Naive thymus-derived CD4-positive, alpha-beta T cell (primary cell): ENCODE measurements at regions of chr2 and their contacts with region 1.

Region 1: DNA sequence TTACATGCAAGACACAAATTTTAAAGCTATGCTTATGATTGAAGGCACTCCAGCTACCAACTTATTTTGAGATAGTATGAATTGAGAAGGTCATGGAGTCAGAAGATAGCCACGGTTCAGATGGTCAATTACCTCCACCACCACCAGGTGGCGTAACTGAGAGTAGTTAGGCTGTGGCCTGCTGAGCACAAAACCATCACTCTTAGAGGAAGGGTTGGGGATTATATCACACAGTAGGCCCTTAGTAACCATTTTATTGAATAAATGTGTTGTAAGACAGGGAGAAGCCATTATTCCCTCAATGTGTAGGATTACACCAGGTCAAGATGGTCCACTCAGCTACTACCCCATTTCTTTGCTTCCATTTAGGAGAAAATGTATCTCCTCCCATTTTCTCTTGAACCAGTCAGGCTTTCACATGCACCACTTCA is 18.8 kb downstream of the KLHL41 start:
- DNase-seq: peak; percentile 31 to 71 (median 54)
- ATAC-seq: peak; percentile 92
- H3K4me3 ChIP-seq: no peak overlapping the region
- H3K4me3 Mint-ChIP-seq: no peak overlapping the region
- H3K27ac ChIP-seq: no peak overlapping the region
- H3K27ac Mint-ChIP-seq: peak overlapping the region in 4 of 9 donors; percentile 0 to 68 (median 20)
- H3K4me1 ChIP-seq: no peaks in the 10 kb centered on the region
- H3K4me1 Mint-ChIP-seq: peaks cover 0 to 8% (median 0%) of the 10 kb centered on the region in 7 donors
- H3K27me3 ChIP-seq: no peaks in the 10 kb centered on the region
- H3K27me3 Mint-ChIP-seq: no peaks in the 10 kb centered on the region

Region 2: DNA sequence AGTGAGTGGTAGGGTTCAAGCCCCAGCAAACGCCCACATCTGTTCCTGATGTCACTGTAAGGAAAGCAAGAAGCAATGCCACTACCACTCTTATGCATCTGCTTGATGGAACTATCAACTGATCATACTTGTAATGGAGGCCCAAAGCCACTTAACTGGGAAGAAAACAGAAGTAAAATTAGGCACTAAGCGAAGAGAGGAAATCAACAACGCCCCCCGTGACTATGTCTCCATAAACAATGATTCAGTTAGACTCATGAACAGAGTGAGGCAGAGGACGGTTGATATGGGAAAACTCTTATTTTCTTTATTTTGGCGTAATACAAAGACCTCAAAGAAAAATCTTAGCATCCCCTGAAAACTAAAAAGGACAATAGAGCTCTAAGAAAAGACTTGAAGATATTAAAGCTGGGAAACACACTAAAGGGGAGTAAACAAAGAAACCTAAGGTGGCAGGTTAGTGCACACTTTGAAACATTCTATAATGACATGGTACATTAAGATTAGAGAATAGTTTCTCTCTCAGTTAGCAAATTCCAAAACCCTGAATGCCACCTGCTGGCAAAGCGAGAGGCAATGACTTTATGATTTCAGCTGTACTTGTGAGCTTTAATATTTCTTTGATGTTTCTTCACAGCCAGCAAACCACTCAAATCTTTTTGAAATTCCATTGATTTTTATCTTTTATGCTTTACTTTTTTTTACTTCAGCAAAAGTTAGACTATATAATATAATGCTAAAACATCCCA is 252.4 kb before region 1 on chr2:
- CTCF ChIA-PET with region 1: no interaction called
- POLR2A ChIA-PET with region 1: no interaction called
- intact Hi-C with region 1: no loop called
- DNase-seq: no peak
- ATAC-seq: no peak
- H3K4me3 ChIP-seq: no peak overlapping the region
- H3K4me3 Mint-ChIP-seq: no peak overlapping the region
- H3K27ac ChIP-seq: no peak overlapping the region
- H3K27ac Mint-ChIP-seq: no peak overlapping the region
- H3K4me1 ChIP-seq: no peaks in the 10 kb centered on the region
- H3K4me1 Mint-ChIP-seq: no peaks in the 10 kb centered on the region
- H3K27me3 ChIP-seq: no peaks in the 10 kb centered on the region
- H3K27me3 Mint-ChIP-seq: peaks cover 0 to 21% (median 17%) of the 10 kb centered on the region in 5 donors

Region 3: GRCh38 chr2:169734169-169734847 is 206.0 kb after region 1 on chr2:
- CTCF ChIA-PET with region 1: no interaction called
- POLR2A ChIA-PET with region 1: no interaction called
- intact Hi-C with region 1: no loop called
- DNase-seq: peak in 5 of 9 donors; percentile 0 to 57 (median 8)
- ATAC-seq: peak; percentile 45
- H3K4me3 ChIP-seq: peak overlapping the region; percentile 43
- H3K4me3 Mint-ChIP-seq: peak overlapping the region; percentile 65 to 96 (median 73)
- H3K27ac ChIP-seq: no peak overlapping the region
- H3K27ac Mint-ChIP-seq: no peak overlapping the region
- H3K4me1 ChIP-seq: peaks cover 7 to 8% of the 10 kb centered on the region in 2 donors
- H3K4me1 Mint-ChIP-seq: peaks cover 12 to 27% (median 18%) of the 10 kb centered on the region in 7 donors
- H3K27me3 ChIP-seq: peaks cover 0 to 22% of the 10 kb centered on the region in 2 donors
- H3K27me3 Mint-ChIP-seq: peaks cover 30 to 49% (median 45%) of the 10 kb centered on the region in 5 donors

Region 4: DNA sequence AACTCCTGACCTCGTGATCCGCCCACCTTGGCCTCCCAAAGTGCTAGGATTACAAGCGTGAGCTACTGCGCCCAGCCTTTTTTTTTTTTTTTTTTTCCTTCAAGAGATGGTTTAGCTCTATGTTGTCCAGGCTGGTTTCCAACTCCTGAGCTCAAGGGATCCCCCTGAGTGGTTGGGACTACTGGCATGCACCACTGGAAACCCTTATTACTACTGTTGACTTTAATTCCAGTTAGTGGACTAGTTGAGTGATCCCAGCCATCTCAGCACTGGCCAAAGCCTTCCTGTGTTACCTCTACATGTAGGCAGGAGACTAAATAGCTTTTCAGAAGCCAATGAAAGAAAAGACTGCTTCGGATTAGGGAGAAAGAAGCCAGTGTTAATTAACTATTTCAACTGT is 262.3 kb after region 1 on chr2:
- CTCF ChIA-PET with region 1: no interaction called
- POLR2A ChIA-PET with region 1: no interaction called
- intact Hi-C with region 1: loop called (anchors 2 to 10 kb)
- DNase-seq: no peak
- ATAC-seq: no peak
- H3K4me3 ChIP-seq: no peak overlapping the region
- H3K4me3 Mint-ChIP-seq: no peak overlapping the region
- H3K27ac ChIP-seq: no peak overlapping the region
- H3K27ac Mint-ChIP-seq: no peak overlapping the region
- H3K4me1 ChIP-seq: no peaks in the 10 kb centered on the region
- H3K4me1 Mint-ChIP-seq: peaks cover 4 to 6% (median 6%) of the 10 kb centered on the region in 7 donors
- H3K27me3 ChIP-seq: no peaks in the 10 kb centered on the region
- H3K27me3 Mint-ChIP-seq: peaks cover 25 to 40% (median 27%) of the 10 kb centered on the region in 5 donors

Region 5: DNA sequence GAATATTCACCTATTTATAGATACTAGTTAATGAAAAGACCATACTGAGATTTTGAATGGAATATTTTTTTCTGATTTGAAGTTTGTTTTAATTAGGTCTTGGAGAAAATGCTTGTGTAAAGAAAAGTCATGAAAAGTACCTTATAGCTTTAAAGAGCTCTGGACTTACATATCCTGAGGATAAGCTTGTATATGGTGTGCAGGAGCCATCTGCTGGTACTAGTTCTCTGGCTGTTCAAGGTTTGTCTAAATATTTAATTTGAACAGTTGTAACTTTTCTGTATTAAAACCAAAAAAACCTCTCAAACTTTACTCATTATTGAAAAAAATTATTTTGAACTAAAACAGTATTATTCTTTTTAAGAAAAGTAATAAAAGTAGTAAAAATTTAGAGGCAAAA is 349.1 kb after region 1 on chr2:
- CTCF ChIA-PET with region 1: no interaction called
- POLR2A ChIA-PET with region 1: no interaction called
- intact Hi-C with region 1: loop called (anchors 1 kb)
- DNase-seq: peak in 1 of 9 donors; percentile 11
- ATAC-seq: no peak
- H3K4me3 ChIP-seq: no peak overlapping the region
- H3K4me3 Mint-ChIP-seq: no peak overlapping the region
- H3K27ac ChIP-seq: no peak overlapping the region
- H3K27ac Mint-ChIP-seq: no peak overlapping the region
- H3K4me1 ChIP-seq: no peaks in the 10 kb centered on the region
- H3K4me1 Mint-ChIP-seq: peaks cover 0 to 10% (median 5%) of the 10 kb centered on the region in 7 donors
- H3K27me3 ChIP-seq: no peaks in the 10 kb centered on the region
- H3K27me3 Mint-ChIP-seq: no peaks in the 10 kb centered on the region

Region 6: DNA sequence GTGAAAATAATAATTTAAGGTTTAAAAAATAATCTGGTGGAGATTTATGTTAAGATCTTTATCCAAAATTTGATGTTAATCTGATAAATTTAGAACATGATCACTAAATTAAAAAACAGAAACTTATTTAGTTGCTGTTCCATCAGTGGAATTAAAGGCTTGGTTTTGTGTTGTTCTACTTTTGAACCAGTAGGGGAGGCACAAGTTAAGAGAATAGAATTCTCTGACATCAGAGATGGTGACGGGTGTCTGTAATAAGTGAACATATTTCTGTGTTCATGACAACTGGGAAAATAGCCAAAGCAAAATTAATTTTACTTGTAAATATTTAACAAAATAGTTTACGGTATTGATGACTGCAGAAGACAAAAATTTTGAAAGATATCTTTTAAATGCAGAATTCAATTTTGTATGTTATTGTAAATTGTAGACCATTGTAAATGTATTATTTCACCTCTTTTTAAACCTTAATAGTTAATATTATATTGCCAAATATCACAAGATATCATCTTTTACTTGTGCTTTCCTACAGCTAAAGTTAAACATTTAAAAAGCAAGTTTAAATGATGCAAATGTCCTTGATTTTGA is 404.9 kb after region 1 on chr2:
- CTCF ChIA-PET with region 1: interaction called, 10 read pairs
- POLR2A ChIA-PET with region 1: no interaction called
- intact Hi-C with region 1: loop called (anchors 1 kb)
- DNase-seq: peak in 2 of 9 donors; percentile 6 to 9
- ATAC-seq: no peak
- H3K4me3 ChIP-seq: no peak overlapping the region
- H3K4me3 Mint-ChIP-seq: no peak overlapping the region
- H3K27ac ChIP-seq: no peak overlapping the region
- H3K27ac Mint-ChIP-seq: no peak overlapping the region
- H3K4me1 ChIP-seq: no peaks in the 10 kb centered on the region
- H3K4me1 Mint-ChIP-seq: peaks cover 0 to 9% (median 0%) of the 10 kb centered on the region in 7 donors
- H3K27me3 ChIP-seq: no peaks in the 10 kb centered on the region
- H3K27me3 Mint-ChIP-seq: no peaks in the 10 kb centered on the region